PC-3 (cell line): ENCODE measurements at regions of chr3 and their contacts with region 1.

Region 1: DNA sequence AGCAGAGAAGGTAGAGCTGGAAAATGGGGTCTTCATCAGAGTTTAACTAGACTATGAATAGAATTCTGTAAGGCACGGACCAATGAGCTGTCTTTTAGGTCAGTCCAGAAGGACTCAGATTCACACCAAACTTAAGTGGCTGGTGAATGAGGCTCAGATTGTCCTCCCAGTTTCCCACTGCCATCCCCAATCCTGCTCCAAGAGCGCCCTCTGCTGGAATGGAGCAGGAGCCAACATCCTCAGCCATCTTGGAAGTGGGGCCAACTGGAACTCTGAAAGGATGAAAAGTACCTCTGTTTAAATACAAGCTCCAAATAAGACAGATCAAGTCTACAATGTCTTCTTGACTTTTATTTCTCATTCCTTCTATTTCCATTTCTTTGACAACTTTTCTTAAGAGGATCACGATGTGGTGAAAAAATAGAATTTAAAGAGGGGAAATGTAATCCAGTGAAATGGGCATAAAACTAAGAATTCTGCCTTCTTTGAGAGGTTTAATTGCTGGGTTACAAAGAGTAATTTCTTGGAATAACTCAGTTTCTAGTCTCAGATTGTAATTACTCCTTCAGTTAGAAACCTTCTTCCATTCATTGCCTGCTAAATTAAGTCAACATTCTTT is 217.1 kb upstream of the TPRG1 start:
- DNase-seq: peak; percentile 92
- ATAC-seq: peak; percentile 50; the same call in 1 of the 2 replicates
- H3K4me3 ChIP-seq: no peak overlapping the region
- H3K27ac ChIP-seq: no peak overlapping the region
- H3K4me1 ChIP-seq: peaks cover 20% of the 10 kb centered on the region
- H3K27me3 ChIP-seq: no peaks in the 10 kb centered on the region
- CTCF ChIP-seq: peak; percentile 98

Region 2: GRCh38 chr3:188037216-188037718 is 917.4 kb before region 1 on chr3:
- CTCF ChIA-PET with region 1: no interaction called
- POLR2A ChIA-PET with region 1: no interaction called
- intact Hi-C with region 1: loop called (anchors 5 kb)
- DNase-seq: peak; percentile 65
- ATAC-seq: peak; percentile 90
- H3K4me3 ChIP-seq: no peak overlapping the region
- H3K27ac ChIP-seq: no peak overlapping the region
- H3K4me1 ChIP-seq: peaks cover 16% of the 10 kb centered on the region
- H3K27me3 ChIP-seq: no peaks in the 10 kb centered on the region
- CTCF ChIP-seq: peak; percentile 69

Region 3: GRCh38 chr3:188262913-188263683 is 691.6 kb before region 1 on chr3:
- CTCF ChIA-PET with region 1: no interaction called
- POLR2A ChIA-PET with region 1: interaction called, 3 read pairs
- intact Hi-C with region 1: loop called (anchors 5 kb)
- DNase-seq: peak; percentile 96
- ATAC-seq: peak; percentile 71
- H3K4me3 ChIP-seq: peak overlapping the region; percentile 46
- H3K27ac ChIP-seq: peak overlapping the region; percentile 96
- H3K4me1 ChIP-seq: peaks cover 75% of the 10 kb centered on the region
- H3K27me3 ChIP-seq: no peaks in the 10 kb centered on the region
- CTCF ChIP-seq: no peak

Region 4: DNA sequence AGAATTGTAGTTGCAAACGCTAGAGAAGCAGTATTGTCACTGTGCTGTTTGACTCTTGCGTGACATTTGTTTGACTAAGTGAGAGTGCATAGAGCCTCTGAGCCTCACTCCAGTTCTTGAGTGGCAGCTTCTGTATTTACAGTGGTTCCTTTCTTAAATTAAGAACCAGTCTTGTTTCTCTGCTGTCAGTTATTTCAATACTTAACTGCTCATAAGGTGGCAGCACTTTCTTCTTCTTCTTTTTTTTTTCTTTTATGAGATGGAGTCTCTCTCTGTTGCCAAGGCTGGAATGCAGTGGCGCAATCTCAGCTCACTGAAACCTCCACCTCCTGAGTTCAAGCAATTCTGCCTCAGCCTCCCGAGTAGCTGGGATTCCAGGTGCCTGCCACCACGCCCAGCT is 428.6 kb before region 1 on chr3:
- CTCF ChIA-PET with region 1: no interaction called
- POLR2A ChIA-PET with region 1: no interaction called
- intact Hi-C with region 1: loop called (anchors 5 kb)
- DNase-seq: peak; percentile 39
- ATAC-seq: no peak
- H3K4me3 ChIP-seq: no peak overlapping the region
- H3K27ac ChIP-seq: no peak overlapping the region
- H3K4me1 ChIP-seq: peaks cover 32% of the 10 kb centered on the region
- H3K27me3 ChIP-seq: no peaks in the 10 kb centered on the region
- CTCF ChIP-seq: no peak; the same call in 1 of the 2 replicates

Region 5: DNA sequence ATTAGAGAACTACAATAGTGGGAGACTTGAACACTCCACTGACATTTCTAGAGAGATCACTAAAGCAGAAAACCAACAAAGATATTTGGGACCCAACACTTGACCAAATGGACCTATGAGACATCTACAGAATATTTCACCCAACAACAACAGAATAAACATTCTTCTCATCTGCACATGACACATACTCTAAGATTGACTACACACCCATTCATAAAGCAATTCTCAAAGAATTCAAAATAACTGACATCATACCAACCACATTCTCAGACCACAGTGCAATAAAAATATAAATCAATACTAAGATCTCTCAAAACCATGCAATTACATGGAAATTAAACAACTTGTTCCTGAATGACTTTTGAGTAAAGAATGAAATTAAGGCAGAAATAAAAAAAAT is 327.0 kb before region 1 on chr3:
- CTCF ChIA-PET with region 1: no interaction called
- POLR2A ChIA-PET with region 1: no interaction called
- intact Hi-C with region 1: loop called (anchors 5 kb)
- DNase-seq: peak; percentile 91
- ATAC-seq: peak; percentile 91
- H3K4me3 ChIP-seq: 0 out of 2 replicates have a peak overlapping the region, but pooled peaks have one; percentile 5
- H3K27ac ChIP-seq: peak overlapping the region; percentile 88
- H3K4me1 ChIP-seq: peaks cover 41% of the 10 kb centered on the region
- H3K27me3 ChIP-seq: no peaks in the 10 kb centered on the region
- CTCF ChIP-seq: no peak

Region 6: DNA sequence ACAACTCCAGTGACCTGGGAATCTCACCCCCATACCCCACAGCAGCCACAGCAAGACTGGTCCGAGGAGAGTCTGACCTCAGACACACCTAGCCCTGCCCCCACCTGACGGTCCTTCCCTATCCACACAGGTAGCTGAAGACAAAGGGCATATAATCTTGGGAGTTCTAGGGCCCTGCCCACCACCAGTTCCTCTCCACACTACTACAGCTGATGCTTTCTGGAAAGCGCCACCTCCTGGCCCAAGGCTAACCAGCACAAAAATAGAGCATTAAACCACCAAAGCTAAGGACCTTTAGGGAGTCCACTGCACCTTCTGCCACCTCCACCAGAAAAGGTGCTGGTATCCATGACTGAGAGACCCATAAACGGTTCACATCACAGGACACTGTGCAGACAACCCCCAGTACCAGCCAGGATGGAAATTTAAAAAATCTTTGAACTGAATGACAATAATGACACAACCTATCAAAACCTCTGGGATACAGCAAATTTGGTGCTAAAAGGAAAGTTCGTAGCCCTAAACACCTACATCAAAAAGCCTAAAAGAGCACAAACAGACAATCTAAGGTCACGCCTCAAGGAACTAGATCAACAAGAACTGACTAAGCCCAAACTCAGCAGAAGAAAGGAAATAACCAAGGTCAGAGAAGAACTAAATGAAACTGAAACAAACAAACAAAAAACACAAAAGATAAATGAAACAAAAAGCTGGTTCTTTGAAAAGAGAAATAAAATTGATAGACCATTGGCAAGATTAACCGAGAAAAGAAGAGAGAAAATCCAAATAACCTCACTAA is 94.9 kb after region 1 on chr3:
- CTCF ChIA-PET with region 1: no interaction called
- POLR2A ChIA-PET with region 1: no interaction called
- intact Hi-C with region 1: no loop called
- DNase-seq: peak; percentile 21
- ATAC-seq: no peak
- H3K4me3 ChIP-seq: no peak overlapping the region
- H3K27ac ChIP-seq: no peak overlapping the region
- H3K4me1 ChIP-seq: no peaks in the 10 kb centered on the region
- H3K27me3 ChIP-seq: no peaks in the 10 kb centered on the region
- CTCF ChIP-seq: peak; percentile 52

Region 7: GRCh38 chr3:189148081-189148507 is 193.4 kb after region 1 on chr3:
- CTCF ChIA-PET with region 1: no interaction called
- POLR2A ChIA-PET with region 1: no interaction called
- intact Hi-C with region 1: loop called (anchors 1 kb)
- DNase-seq: peak; percentile 82
- ATAC-seq: peak; percentile 80
- H3K4me3 ChIP-seq: no peak overlapping the region
- H3K27ac ChIP-seq: no peak overlapping the region
- H3K4me1 ChIP-seq: no peaks in the 10 kb centered on the region
- H3K27me3 ChIP-seq: no peaks in the 10 kb centered on the region
- CTCF ChIP-seq: peak; percentile 90